HEK293 (cell line): ENCODE measurements at regions of chr2 and their contacts with region 1.

Region 1: DNA sequence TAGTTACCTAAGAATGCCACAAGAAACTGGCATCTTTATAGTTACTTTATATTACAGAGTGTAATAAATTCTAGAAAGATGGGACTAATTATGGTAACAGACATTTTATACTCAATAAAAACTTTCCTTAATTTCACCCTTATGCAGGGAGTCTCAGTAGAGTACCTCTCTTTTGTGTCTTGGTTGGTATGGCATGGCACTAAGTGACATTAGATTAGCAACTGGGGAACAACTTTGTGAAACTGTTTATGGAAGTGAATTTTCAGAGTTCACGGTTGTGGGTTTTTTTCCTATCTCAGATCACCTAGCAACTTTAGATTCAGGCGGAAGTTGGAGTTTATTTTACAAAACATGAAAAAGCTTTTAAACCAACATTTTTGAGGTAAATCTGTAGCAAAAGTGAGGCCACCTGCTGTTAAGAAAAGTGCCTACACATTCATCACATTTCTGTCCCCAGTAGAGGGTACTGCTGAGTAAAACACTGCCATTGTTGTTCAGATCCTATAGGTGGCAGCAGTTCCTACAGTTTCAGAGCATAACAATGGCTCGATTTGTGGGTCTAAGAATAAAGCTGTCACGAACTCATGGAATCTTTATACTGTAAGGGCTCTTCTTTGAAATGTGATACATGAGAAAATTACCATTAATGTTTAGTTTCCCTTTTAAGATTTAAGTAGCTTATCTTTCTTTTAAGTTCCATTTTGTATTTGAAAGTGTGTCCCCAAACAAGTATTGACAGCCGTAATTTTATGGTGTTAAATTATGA is 117.6 kb downstream of the CAMKMT start:
- H3K4me3 ChIP-seq: no peak overlapping the region
- H3K27ac ChIP-seq: no peak overlapping the region
- H3K4me1 ChIP-seq: no peaks in the 10 kb centered on the region
- CTCF ChIP-seq: peak; percentile 97

Region 2: GRCh38 chr2:44456946-44457345 is 22.4 kb before region 1 on chr2:
- CTCF ChIA-PET with region 1: interaction called, 16 read pairs
- POLR2A ChIA-PET with region 1: no interaction called
- H3K4me3 ChIP-seq: no peak overlapping the region
- H3K27ac ChIP-seq: no peak overlapping the region
- H3K4me1 ChIP-seq: no peaks in the 10 kb centered on the region
- CTCF ChIP-seq: no peak

Region 3: DNA sequence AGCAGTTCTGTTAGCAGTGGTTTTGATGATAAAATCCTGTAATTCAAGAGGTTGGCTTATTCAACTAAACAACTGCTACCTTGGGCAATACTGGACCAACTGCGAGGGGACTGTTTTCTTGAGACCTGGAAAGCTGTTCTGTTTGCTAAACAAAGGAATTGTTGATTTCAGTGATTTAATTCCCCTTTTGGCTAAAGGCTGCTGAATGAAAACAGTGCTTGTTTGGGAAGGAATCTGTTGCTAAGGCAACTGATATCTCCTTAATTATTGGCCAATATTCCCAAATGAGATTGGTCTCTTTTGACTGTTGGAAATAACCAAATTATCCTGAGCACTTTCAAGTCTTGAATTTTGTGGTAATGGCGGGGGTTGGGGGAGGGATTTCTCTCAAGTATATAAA is 19.2 kb after region 1 on chr2:
- CTCF ChIA-PET with region 1: interaction called, 18 read pairs
- POLR2A ChIA-PET with region 1: no interaction called
- H3K4me3 ChIP-seq: no peak overlapping the region
- H3K27ac ChIP-seq: no peak overlapping the region
- H3K4me1 ChIP-seq: no peaks in the 10 kb centered on the region
- CTCF ChIP-seq: no peak

Region 4: GRCh38 chr2:44707945-44708660 is 228.8 kb after region 1 on chr2:
- CTCF ChIA-PET with region 1: interaction called, 16 read pairs
- POLR2A ChIA-PET with region 1: no interaction called
- H3K4me3 ChIP-seq: no peak overlapping the region
- H3K27ac ChIP-seq: no peak overlapping the region
- H3K4me1 ChIP-seq: no peaks in the 10 kb centered on the region; the same call in 1 of the 2 replicates
- CTCF ChIP-seq: no peak

Region 5: GRCh38 chr2:44955593-44956392 is 476.5 kb after region 1 on chr2:
- CTCF ChIA-PET with region 1: interaction called, 113 read pairs
- POLR2A ChIA-PET with region 1: no interaction called
- H3K4me3 ChIP-seq: peak overlapping the region; percentile 26
- H3K27ac ChIP-seq: no peak overlapping the region
- H3K4me1 ChIP-seq: peaks cover 3% of the 10 kb centered on the region; the same call in 1 of the 2 replicates
- CTCF ChIP-seq: peak; percentile 97